ENCODE measurements at regions of chr11 and their contacts with region 1.

Region 1: GRCh38 chr11:126607374-126607773 is 251.9 kb downstream of the ST3GAL4 start:
- DNase-seq: peak; percentile 76 to 79
- H3K4me3 ChIP-seq: no peak overlapping the region
- H3K4me3 Mint-ChIP-seq: no peak overlapping the region
- H3K27ac Mint-ChIP-seq: no peak overlapping the region
- H3K4me1 ChIP-seq: no peaks in the 10 kb centered on the region
- H3K4me1 Mint-ChIP-seq: no peaks in the 10 kb centered on the region
- H3K27me3 ChIP-seq: peaks cover 2% of the 10 kb centered on the region
- H3K27me3 Mint-ChIP-seq: peaks cover 26% of the 10 kb centered on the region
- CTCF ChIP-seq: peak; percentile 88 to 98

Region 2: DNA sequence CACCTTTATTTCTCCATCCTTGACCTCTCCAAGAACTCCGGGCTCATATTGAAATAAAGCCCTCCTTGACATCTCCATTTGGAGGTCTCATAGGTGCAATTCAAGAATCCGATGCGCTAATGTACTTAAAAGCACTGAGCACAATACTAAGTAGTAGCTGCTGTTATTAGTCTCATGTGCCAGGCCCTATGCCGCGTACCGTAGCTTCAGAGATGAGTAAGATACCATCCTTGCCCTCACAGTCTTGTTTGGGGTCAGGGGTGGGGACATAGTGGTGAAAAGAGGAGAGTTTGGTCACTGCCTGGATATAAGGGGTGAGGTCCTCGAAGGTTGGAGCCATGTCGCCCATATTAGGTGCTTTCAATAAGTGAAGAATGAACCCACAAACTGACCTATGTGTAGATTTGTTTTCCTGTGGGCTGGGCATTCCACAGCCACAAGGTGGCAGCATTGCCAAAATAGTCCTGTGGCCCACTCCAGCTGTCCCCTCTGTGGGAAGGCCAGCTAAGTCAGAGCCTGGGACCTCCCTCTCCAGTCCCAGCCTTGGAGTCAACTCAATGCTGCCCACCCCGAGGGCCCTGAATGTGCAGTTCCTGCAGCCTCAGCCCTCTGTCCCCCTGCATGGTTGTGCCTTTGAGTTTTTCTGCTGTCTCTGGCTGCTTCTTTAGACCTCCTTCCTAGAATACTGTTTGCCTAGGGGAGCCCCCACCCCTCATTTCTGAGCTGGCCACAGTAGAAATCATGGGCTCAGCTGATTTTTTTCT is 297.0 kb before region 1 on chr11:
- CTCF ChIA-PET with region 1: no interaction called
- POLR2A ChIA-PET with region 1: no interaction called
- intact Hi-C with region 1: loop called (anchors 10 kb)
- DNase-seq: peak; percentile 81 to 86
- H3K4me3 ChIP-seq: no peak overlapping the region
- H3K4me3 Mint-ChIP-seq: no peak overlapping the region
- H3K27ac Mint-ChIP-seq: no peak overlapping the region
- H3K4me1 ChIP-seq: 0 out of 2 replicates have a peak, but pooled peaks cover under 1% of the 10 kb centered on the region
- H3K4me1 Mint-ChIP-seq: no peaks in the 10 kb centered on the region
- H3K27me3 ChIP-seq: no peaks in the 10 kb centered on the region
- H3K27me3 Mint-ChIP-seq: no peaks in the 10 kb centered on the region
- CTCF ChIP-seq: peak; percentile 89 to 99

Region 3: GRCh38 chr11:126686938-126687337 is 79.6 kb after region 1 on chr11:
- CTCF ChIA-PET with region 1: no interaction called
- POLR2A ChIA-PET with region 1: no interaction called
- intact Hi-C with region 1: loop called (anchors 5 kb)
- DNase-seq: no peak
- H3K4me3 ChIP-seq: no peak overlapping the region
- H3K4me3 Mint-ChIP-seq: no peak overlapping the region
- H3K27ac Mint-ChIP-seq: no peak overlapping the region
- H3K4me1 ChIP-seq: no peaks in the 10 kb centered on the region
- H3K4me1 Mint-ChIP-seq: no peaks in the 10 kb centered on the region
- H3K27me3 ChIP-seq: peaks cover 4% of the 10 kb centered on the region
- H3K27me3 Mint-ChIP-seq: peaks cover 36% of the 10 kb centered on the region
- CTCF ChIP-seq: no peak

Region 4: DNA sequence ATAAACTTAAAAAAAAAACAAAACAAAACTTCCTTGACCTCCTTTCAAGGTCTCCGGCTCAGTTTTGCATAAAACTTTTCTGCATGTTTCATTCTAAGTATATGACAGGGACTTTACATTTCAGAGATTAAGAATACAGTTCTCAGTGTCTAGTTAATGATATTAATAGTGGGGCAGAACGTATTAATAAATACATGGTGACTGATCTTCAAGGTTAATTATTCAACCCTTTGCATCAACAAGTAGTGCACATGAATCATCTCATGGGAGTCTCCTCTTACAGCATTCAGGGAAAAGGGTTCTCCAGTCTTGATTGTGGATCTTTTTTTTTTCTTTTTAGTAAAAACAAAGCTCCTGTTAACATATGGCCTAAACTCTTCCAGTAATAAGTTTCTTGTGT is 246.4 kb after region 1 on chr11:
- CTCF ChIA-PET with region 1: no interaction called
- POLR2A ChIA-PET with region 1: no interaction called
- intact Hi-C with region 1: no loop called
- DNase-seq: no peak
- H3K4me3 ChIP-seq: no peak overlapping the region
- H3K4me3 Mint-ChIP-seq: no peak overlapping the region
- H3K27ac Mint-ChIP-seq: no peak overlapping the region
- H3K4me1 ChIP-seq: no peaks in the 10 kb centered on the region
- H3K4me1 Mint-ChIP-seq: no peaks in the 10 kb centered on the region
- H3K27me3 ChIP-seq: peaks cover 1% of the 10 kb centered on the region; the same call in 1 of the 2 replicates
- H3K27me3 Mint-ChIP-seq: peaks cover 4% of the 10 kb centered on the region
- CTCF ChIP-seq: no peak

Region 5: DNA sequence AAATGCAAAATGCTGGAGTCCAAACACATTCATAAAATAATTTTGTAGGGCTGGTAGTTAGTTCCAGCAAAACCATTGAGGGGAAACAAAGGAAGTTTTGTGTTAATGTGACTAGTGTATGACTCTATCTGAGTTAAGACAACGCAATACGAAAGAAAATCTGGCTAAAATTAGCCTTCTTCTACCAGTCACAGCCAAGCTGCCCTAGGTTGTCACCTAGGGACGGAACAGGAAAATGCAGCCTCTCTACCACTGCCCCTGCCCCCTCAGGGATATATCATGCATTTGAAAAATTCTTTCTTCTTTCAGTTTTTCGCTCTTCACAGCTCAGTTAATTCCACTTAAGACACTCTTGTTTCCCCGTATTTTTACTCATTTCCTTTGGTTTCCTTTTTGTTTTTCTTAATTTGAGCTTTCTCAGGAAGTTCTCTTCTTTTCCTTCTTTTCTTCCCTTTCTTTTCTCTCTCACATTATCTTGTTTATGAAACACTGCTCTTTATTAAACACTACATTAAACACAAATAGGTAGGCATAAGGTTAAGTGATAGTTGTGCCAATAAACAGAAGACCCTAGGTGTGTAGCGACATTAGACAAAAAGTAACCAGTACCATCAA is 362.6 kb after region 1 on chr11:
- CTCF ChIA-PET with region 1: no interaction called
- POLR2A ChIA-PET with region 1: no interaction called
- intact Hi-C with region 1: loop called (anchors 5 kb)
- DNase-seq: peak in 1 of 2 experiments; percentile 28
- H3K4me3 ChIP-seq: no peak overlapping the region
- H3K4me3 Mint-ChIP-seq: no peak overlapping the region
- H3K27ac Mint-ChIP-seq: no peak overlapping the region
- H3K4me1 ChIP-seq: no peaks in the 10 kb centered on the region
- H3K4me1 Mint-ChIP-seq: no peaks in the 10 kb centered on the region
- H3K27me3 ChIP-seq: 0 out of 2 replicates have a peak, but pooled peaks cover 2% of the 10 kb centered on the region
- H3K27me3 Mint-ChIP-seq: peaks cover 20% of the 10 kb centered on the region
- CTCF ChIP-seq: peak; percentile 60 to 61

Region 6: DNA sequence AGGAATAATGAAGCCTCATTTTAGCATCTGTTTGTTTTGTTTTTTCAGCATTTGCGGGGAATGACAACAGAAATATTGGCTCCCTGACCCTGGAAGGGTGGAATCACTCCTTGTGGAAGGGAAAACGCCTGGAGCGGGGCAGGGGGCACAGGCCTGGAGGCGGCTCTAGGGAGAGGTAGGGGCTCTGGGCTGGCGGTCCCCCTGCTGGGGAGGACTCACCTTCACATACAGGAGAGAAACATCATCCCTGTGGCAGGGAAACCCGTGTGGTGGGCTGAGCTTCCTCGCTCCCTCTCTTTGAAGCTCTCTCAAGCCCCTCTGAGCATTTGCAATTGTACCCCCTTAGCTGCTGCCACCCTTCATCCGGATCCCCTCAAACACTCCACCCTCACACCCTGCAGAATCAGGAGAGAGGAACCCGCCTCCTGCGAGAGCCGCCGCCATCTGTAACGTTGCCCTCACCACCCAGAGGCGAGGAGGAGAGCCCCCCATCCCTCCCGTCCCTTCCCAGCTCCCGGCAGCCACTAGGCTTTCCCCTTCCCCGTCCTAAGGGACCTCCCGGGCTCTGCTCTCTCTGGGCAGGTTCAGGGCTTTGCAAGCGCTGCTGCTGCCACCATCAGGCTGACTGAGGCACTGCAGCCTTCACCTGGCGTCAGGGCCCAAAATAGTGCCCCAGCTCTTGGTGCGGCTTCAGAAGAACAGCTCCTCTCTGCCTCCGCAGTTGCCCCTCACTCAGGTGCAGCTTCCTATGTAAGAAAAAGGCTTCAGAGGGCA is 382.8 kb after region 1 on chr11:
- CTCF ChIA-PET with region 1: interaction called, 14 read pairs
- POLR2A ChIA-PET with region 1: no interaction called
- intact Hi-C with region 1: loop called (anchors 1 kb)
- DNase-seq: peak; percentile 83 to 84
- H3K4me3 ChIP-seq: no peak overlapping the region
- H3K4me3 Mint-ChIP-seq: no peak overlapping the region
- H3K27ac Mint-ChIP-seq: no peak overlapping the region
- H3K4me1 ChIP-seq: no peaks in the 10 kb centered on the region
- H3K4me1 Mint-ChIP-seq: no peaks in the 10 kb centered on the region
- H3K27me3 ChIP-seq: no peaks in the 10 kb centered on the region
- H3K27me3 Mint-ChIP-seq: peaks cover 36% of the 10 kb centered on the region
- CTCF ChIP-seq: peak; percentile 98 to 99

Region 7: DNA sequence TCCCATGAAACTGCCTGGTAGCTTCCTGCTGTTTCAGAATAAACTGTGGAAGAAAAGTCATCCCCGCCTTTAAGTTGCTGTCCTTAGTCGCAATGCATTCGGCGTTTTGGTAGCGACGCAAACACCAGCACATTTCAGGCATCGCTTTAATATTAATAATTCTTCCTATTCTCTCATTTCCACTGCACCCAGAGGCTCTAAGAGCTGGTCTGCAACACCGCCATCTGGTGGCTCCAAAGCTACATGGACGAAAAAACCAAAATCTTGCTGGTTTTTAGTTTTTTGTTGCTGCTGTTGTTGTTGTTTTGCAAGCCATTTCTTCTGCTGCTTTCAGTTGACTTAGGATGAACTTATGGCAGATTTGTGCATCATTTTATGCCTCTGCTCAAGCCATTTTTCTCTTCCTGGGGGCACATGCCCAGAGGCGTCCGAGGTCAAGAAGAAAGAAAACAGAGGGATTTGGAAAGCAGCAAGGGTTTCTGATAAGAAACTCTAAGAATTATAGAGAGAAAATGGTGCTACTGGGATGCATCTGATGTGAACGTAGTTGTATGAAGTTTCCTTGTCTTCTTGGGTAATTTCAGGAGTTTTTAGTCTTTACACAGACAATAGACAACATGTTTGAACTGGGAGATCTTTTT is 738.6 kb after region 1 on chr11:
- CTCF ChIA-PET with region 1: no interaction called
- POLR2A ChIA-PET with region 1: no interaction called
- intact Hi-C with region 1: loop called (anchors 5 kb)
- DNase-seq: peak in 1 of 2 experiments; percentile 51
- H3K4me3 ChIP-seq: no peak overlapping the region
- H3K4me3 Mint-ChIP-seq: no peak overlapping the region
- H3K27ac Mint-ChIP-seq: no peak overlapping the region
- H3K4me1 ChIP-seq: no peaks in the 10 kb centered on the region
- H3K4me1 Mint-ChIP-seq: no peaks in the 10 kb centered on the region
- H3K27me3 ChIP-seq: no peaks in the 10 kb centered on the region
- H3K27me3 Mint-ChIP-seq: peaks cover 1% of the 10 kb centered on the region
- CTCF ChIP-seq: peak; percentile 83 to 95